Posterior vena cava (tissue), 2 donors: ENCODE measurements at regions of chr18 and their contacts with region 1.

Region 1: GRCh38 chr18:49344096-49344495 is 116.3 kb downstream of the DYM start:
- DNase-seq: no peak

Region 2: DNA sequence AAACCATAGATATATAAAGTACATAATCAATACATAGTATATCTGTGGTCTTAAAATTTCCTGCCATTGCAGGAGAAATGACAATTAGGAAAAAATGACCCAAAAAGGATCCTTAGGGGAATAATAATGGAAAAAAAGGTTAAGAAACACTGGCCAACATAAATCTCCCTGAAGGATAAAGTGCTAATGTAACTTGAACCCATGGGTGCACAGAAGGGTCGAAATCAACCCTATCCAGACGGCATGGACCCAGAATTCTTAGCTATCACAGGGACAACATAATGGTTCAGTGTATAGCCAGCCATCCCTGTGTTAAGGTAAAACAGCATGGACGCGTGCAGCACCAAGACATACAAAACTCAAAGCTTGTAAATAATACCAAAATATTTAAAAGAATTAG is 34.4 kb before region 1 on chr18:
- intact Hi-C with region 1: no loop called
- DNase-seq: no peak

Region 3: GRCh38 chr18:49321800-49322461 is 22.2 kb before region 1 on chr18:
- intact Hi-C with region 1: loop called in 1 of 2 experiments (anchors 1 kb)
- DNase-seq: no peak

Region 4: GRCh38 chr18:50115095-50115494 is 771.0 kb after region 1 on chr18:
- intact Hi-C with region 1: no loop called
- DNase-seq: no peak